ENCODE measurements at regions of chr21 and their contacts with region 1.

Region 1: DNA sequence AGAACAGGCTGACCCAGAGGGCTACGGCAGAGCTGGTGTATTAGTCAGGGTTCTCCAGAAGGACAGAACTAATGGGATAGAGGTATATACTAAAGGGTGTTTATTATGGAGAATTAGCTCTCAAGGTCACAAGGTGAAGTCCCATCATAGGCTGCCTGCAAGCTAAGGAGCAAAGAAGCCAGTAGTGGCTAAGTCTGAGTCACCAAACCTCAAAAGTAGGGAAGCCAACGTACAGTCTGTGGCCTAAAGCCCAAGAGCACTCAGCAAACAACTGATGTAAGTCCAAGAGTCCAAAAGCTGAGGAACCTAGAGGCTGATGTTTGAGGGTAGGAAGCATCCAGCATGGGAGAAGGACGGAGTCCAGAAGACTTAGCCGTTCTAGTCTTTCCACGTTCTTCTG is 179.2 kb downstream of the BACH1 start:
- DNase-seq: no peak
- H3K4me3 ChIP-seq: no peak overlapping the region
- CTCF ChIP-seq: no peak
- POLR2A ChIP-seq: no peak

Region 2: GRCh38 chr21:29287383-29287782 is 190.6 kb before region 1 on chr21:
- intact Hi-C with region 1: no loop called
- DNase-seq: no peak
- H3K4me3 ChIP-seq: no peak overlapping the region
- CTCF ChIP-seq: no peak
- POLR2A ChIP-seq: no peak

Region 3: GRCh38 chr21:29849735-29850176 is 371.8 kb after region 1 on chr21:
- intact Hi-C with region 1: loop called (anchors 10 kb)
- DNase-seq: peak in 1 of 2 donors; percentile 27
- H3K4me3 ChIP-seq: no peak overlapping the region
- CTCF ChIP-seq: no peak
- POLR2A ChIP-seq: no peak

Measured in lower leg skin (tissue), 4 donors.